ENCODE measurements at regions of chr12 and their contacts with region 1.

Region 1: GRCh38 chr12:121793838-121794533 is 498 bp upstream of the RHOF start:
- DNase-seq: peak; percentile 97
- ATAC-seq: peak; percentile 62
- H3K4me3 Mint-ChIP-seq: peak overlapping the region; percentile 93
- H3K27ac Mint-ChIP-seq: peak overlapping the region; percentile 90
- H3K4me1 Mint-ChIP-seq: peaks cover 53% of the 10 kb centered on the region
- H3K27me3 Mint-ChIP-seq: no peaks in the 10 kb centered on the region

Region 2: GRCh38 chr12:121550974-121551634 is 242.9 kb before region 1 on chr12:
- CTCF ChIA-PET with region 1: interaction called, 14 read pairs
- DNase-seq: no peak
- ATAC-seq: no peak
- H3K4me3 Mint-ChIP-seq: no peak overlapping the region
- H3K27ac Mint-ChIP-seq: no peak overlapping the region
- H3K4me1 Mint-ChIP-seq: peaks cover 13% of the 10 kb centered on the region
- H3K27me3 Mint-ChIP-seq: no peaks in the 10 kb centered on the region

Region 3: GRCh38 chr12:121634836-121635235 is 159.2 kb before region 1 on chr12:
- CTCF ChIA-PET with region 1: no interaction called
- DNase-seq: no peak
- ATAC-seq: no peak
- H3K4me3 Mint-ChIP-seq: no peak overlapping the region
- H3K27ac Mint-ChIP-seq: peak overlapping the region; percentile 22
- H3K4me1 Mint-ChIP-seq: peaks cover 67% of the 10 kb centered on the region
- H3K27me3 Mint-ChIP-seq: no peaks in the 10 kb centered on the region

Region 4: GRCh38 chr12:121697098-121697698 is 96.8 kb before region 1 on chr12:
- CTCF ChIA-PET with region 1: interaction called, 65 read pairs
- DNase-seq: no peak
- ATAC-seq: no peak
- H3K4me3 Mint-ChIP-seq: no peak overlapping the region
- H3K27ac Mint-ChIP-seq: no peak overlapping the region
- H3K4me1 Mint-ChIP-seq: peaks cover 4% of the 10 kb centered on the region
- H3K27me3 Mint-ChIP-seq: peaks cover 2% of the 10 kb centered on the region

Region 5: GRCh38 chr12:121719926-121720414 is 74.0 kb before region 1 on chr12:
- CTCF ChIA-PET with region 1: interaction called, 27 read pairs
- DNase-seq: no peak
- ATAC-seq: no peak
- H3K4me3 Mint-ChIP-seq: no peak overlapping the region
- H3K27ac Mint-ChIP-seq: no peak overlapping the region
- H3K4me1 Mint-ChIP-seq: peaks cover 10% of the 10 kb centered on the region
- H3K27me3 Mint-ChIP-seq: no peaks in the 10 kb centered on the region

Region 6: DNA sequence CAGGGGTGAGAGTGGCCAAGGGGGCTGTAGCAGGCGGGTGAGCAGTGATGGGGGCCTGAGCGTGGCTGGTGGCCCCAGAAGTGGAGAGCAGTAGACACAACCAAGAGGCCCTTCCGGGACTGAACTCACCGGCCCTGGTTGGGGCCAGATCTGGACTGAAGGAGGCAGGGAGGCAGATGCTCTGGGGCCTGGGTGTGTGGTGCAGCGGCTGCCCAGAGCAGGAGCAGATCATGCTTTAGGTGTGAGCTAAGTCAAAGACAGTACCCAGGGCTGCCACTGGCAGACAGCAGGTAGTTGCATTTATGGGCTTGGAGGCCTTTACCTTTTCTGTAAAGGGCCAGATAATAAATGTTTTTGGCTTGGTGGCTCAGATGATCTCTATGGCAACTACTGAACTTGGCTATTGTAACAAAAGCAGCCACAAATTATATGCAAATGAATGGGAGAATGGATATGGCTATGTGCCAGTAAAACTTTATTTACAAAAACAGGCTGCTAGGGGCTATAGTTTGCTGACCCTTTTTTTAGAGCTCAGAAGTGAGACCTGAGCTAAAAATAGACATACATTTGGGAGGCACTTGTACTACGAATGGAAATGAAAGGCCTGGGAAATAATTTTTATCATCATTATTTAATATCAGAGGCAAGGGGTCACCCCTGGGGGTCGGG is 35.4 kb after region 1 on chr12:
- CTCF ChIA-PET with region 1: interaction called, 15 read pairs
- DNase-seq: no peak
- ATAC-seq: no peak
- H3K4me3 Mint-ChIP-seq: no peak overlapping the region
- H3K27ac Mint-ChIP-seq: no peak overlapping the region
- H3K4me1 Mint-ChIP-seq: no peaks in the 10 kb centered on the region
- H3K27me3 Mint-ChIP-seq: no peaks in the 10 kb centered on the region

Region 7: GRCh38 chr12:121894633-121895032 is 100.6 kb after region 1 on chr12:
- CTCF ChIA-PET with region 1: interaction called, 130 read pairs
- DNase-seq: no peak
- ATAC-seq: no peak
- H3K4me3 Mint-ChIP-seq: no peak overlapping the region
- H3K27ac Mint-ChIP-seq: peak overlapping the region; percentile 69
- H3K4me1 Mint-ChIP-seq: peaks cover 32% of the 10 kb centered on the region
- H3K27me3 Mint-ChIP-seq: no peaks in the 10 kb centered on the region

Measured in activated CD8-positive, alpha-beta memory T cell treated with anti-CD3 and anti-CD28 coated beads, Interleukin-2, amount 10 ng/mL, durations not matched to agents 7 days and 5 days (primary cell).